ENCODE measurements at regions of chr2 and their contacts with region 1.

Region 1: GRCh38 chr2:12044857-12045256 is 298.4 kb downstream of the LPIN1 start:
- DNase-seq: peak in 7 of 9 experiments; percentile 33 to 81 (median 51)
- ATAC-seq: peak; percentile 92
- H3K4me3 ChIP-seq: peak overlapping the region in 1 of 2 experiments; percentile 1
- H3K4me3 Mint-ChIP-seq: peak overlapping the region; percentile 49
- H3K27ac ChIP-seq: no peak overlapping the region
- H3K27ac Mint-ChIP-seq: peak overlapping the region; percentile 75
- H3K4me1 ChIP-seq: peaks cover 50% of the 10 kb centered on the region
- H3K4me1 Mint-ChIP-seq: peaks cover 67% of the 10 kb centered on the region
- H3K27me3 ChIP-seq: no peaks in the 10 kb centered on the region
- H3K27me3 Mint-ChIP-seq: no peaks in the 10 kb centered on the region
- CTCF ChIP-seq: no peak

Region 2: GRCh38 chr2:12032398-12032797 is 12.5 kb before region 1 on chr2:
- CTCF ChIA-PET with region 1: interaction called, 9 read pairs
- POLR2A ChIA-PET with region 1: interaction called, 26 read pairs
- intact Hi-C with region 1: no loop called
- DNase-seq: no peak
- ATAC-seq: no peak
- H3K4me3 ChIP-seq: no peak overlapping the region
- H3K4me3 Mint-ChIP-seq: no peak overlapping the region
- H3K27ac ChIP-seq: no peak overlapping the region
- H3K27ac Mint-ChIP-seq: no peak overlapping the region
- H3K4me1 ChIP-seq: peaks cover 23% of the 10 kb centered on the region
- H3K4me1 Mint-ChIP-seq: peaks cover 38% of the 10 kb centered on the region
- H3K27me3 ChIP-seq: peaks cover 0 to 5% of the 10 kb centered on the region in 2 experiments
- H3K27me3 Mint-ChIP-seq: no peaks in the 10 kb centered on the region
- CTCF ChIP-seq: no peak

Region 3: DNA sequence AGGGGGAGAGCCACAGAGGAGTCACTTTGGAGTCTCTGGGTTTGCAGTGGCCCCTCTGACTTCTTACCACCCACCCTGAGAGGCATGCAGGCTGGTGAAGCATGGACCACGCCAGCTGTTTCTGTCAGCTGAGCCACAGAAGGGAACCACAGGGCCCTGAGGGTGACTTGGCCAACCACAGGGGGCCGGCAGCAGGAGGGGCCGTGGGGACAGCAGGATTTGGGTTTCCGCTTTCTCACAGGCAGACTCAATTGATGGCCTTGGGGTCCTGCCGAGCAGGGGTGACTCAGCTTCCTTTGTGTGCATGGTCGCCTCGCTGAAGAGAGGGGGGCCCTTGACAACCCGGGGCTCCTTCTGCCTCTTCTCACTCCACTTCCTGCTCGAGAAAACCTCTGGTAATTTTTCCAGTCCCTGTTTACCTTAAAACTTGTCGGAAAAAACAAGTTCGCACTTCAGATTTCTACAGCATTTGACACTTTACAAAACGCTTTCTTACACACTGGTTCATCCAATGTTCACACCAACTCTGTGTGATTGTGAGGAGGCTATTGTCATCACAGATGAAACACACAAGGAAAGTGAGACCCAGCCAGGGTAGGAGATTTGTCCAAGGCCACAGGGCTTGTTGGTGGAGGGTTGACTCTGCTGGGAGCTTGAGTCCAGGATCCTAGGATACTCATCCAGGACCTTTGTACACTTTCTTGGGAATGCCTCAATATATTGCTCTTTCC is 12.7 kb after region 1 on chr2:
- CTCF ChIA-PET with region 1: interaction called, 10 read pairs
- POLR2A ChIA-PET with region 1: interaction called, 4 read pairs
- intact Hi-C with region 1: no loop called
- DNase-seq: peak; percentile 5 to 74 (median 58)
- ATAC-seq: peak; percentile 85
- H3K4me3 ChIP-seq: no peak overlapping the region
- H3K4me3 Mint-ChIP-seq: peak overlapping the region; percentile 13
- H3K27ac ChIP-seq: no peak overlapping the region
- H3K27ac Mint-ChIP-seq: no peak overlapping the region
- H3K4me1 ChIP-seq: peaks cover 19% of the 10 kb centered on the region
- H3K4me1 Mint-ChIP-seq: peaks cover 37% of the 10 kb centered on the region
- H3K27me3 ChIP-seq: peaks cover 0 to under 1% of the 10 kb centered on the region in 2 experiments
- H3K27me3 Mint-ChIP-seq: no peaks in the 10 kb centered on the region
- CTCF ChIP-seq: no peak

Region 4: GRCh38 chr2:12212841-12213597 is 168.2 kb after region 1 on chr2:
- CTCF ChIA-PET with region 1: no interaction called
- POLR2A ChIA-PET with region 1: no interaction called
- intact Hi-C with region 1: no loop called
- DNase-seq: no peak
- ATAC-seq: no peak
- H3K4me3 ChIP-seq: no peak overlapping the region
- H3K4me3 Mint-ChIP-seq: no peak overlapping the region
- H3K27ac ChIP-seq: no peak overlapping the region
- H3K27ac Mint-ChIP-seq: no peak overlapping the region
- H3K4me1 ChIP-seq: no peaks in the 10 kb centered on the region
- H3K4me1 Mint-ChIP-seq: no peaks in the 10 kb centered on the region
- H3K27me3 ChIP-seq: no peaks in the 10 kb centered on the region
- H3K27me3 Mint-ChIP-seq: no peaks in the 10 kb centered on the region
- CTCF ChIP-seq: no peak

Region 5: GRCh38 chr2:12352889-12353288 is 308.0 kb after region 1 on chr2:
- CTCF ChIA-PET with region 1: no interaction called
- POLR2A ChIA-PET with region 1: no interaction called
- intact Hi-C with region 1: no loop called
- DNase-seq: no peak
- ATAC-seq: no peak
- H3K4me3 ChIP-seq: no peak overlapping the region
- H3K4me3 Mint-ChIP-seq: no peak overlapping the region
- H3K27ac ChIP-seq: no peak overlapping the region
- H3K27ac Mint-ChIP-seq: no peak overlapping the region
- H3K4me1 ChIP-seq: no peaks in the 10 kb centered on the region
- H3K4me1 Mint-ChIP-seq: no peaks in the 10 kb centered on the region
- H3K27me3 ChIP-seq: no peaks in the 10 kb centered on the region
- H3K27me3 Mint-ChIP-seq: no peaks in the 10 kb centered on the region
- CTCF ChIP-seq: no peak

Region 6: DNA sequence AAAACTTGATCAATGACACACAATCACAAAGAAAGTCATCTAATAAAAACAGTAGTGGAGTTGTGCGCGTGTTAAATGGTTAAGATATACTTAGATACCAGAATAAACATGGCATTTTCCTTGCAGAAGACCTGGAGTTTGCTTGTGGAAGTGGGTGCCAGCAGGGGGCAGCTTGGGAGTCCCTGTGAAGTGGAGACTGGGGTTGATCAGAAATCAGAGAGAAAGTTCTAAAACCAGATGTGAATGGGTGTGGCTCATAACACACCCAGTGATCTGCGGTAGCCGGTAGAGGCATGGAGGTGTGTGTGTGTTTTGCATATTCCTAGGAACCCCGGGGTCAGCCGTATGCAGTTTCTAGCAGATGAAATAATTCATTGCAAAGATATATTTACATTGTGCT is 371.7 kb after region 1 on chr2:
- CTCF ChIA-PET with region 1: no interaction called
- POLR2A ChIA-PET with region 1: no interaction called
- intact Hi-C with region 1: loop called in 1 of 2 experiments (anchors 10 kb)
- DNase-seq: peak; percentile 34 to 78 (median 58)
- ATAC-seq: peak; percentile 62
- H3K4me3 ChIP-seq: no peak overlapping the region
- H3K4me3 Mint-ChIP-seq: no peak overlapping the region
- H3K27ac ChIP-seq: no peak overlapping the region
- H3K27ac Mint-ChIP-seq: peak overlapping the region; percentile 5
- H3K4me1 ChIP-seq: peaks cover 20% of the 10 kb centered on the region
- H3K4me1 Mint-ChIP-seq: peaks cover 34% of the 10 kb centered on the region
- H3K27me3 ChIP-seq: no peaks in the 10 kb centered on the region
- H3K27me3 Mint-ChIP-seq: no peaks in the 10 kb centered on the region
- CTCF ChIP-seq: peak; percentile 43